Heart right ventricle (tissue), 16 donors: ENCODE measurements at regions of chr17 and their contacts with region 1.

Region 1: GRCh38 chr17:45098869-45099616 is 33.3 kb downstream of the PLCD3 start:
- DNase-seq: peak; percentile 87 to 88
- ATAC-seq: peak; percentile 70 to 86 (median 78)
- H3K4me3 ChIP-seq: no peak overlapping the region
- H3K27ac ChIP-seq: peak overlapping the region in 7 of 10 donors; percentile 6 to 53 (median 18)
- H3K4me1 ChIP-seq: peaks cover 4 to 55% (median 23%) of the 10 kb centered on the region in 9 donors
- H3K27me3 ChIP-seq: no peaks in the 10 kb centered on the region
- CTCF ChIP-seq: peak; percentile 79 to 94 (median 92)

Region 2: GRCh38 chr17:44911133-44912001 is 187.7 kb before region 1 on chr17:
- intact Hi-C with region 1: loop called in 6 of 10 experiments (anchors 5 to 10 kb)
- DNase-seq: peak; percentile 63 to 64
- ATAC-seq: peak; percentile 57 to 85 (median 80)
- H3K4me3 ChIP-seq: peak overlapping the region in 9 of 10 donors; percentile 14 to 52 (median 46)
- H3K27ac ChIP-seq: peak overlapping the region in 8 of 10 donors; percentile 28 to 73 (median 44)
- H3K4me1 ChIP-seq: peaks cover 0 to 32% (median 13%) of the 10 kb centered on the region in 9 donors
- H3K27me3 ChIP-seq: peaks cover 0 to 42% (median 12%) of the 10 kb centered on the region in 7 donors
- CTCF ChIP-seq: peak; percentile 23 to 69 (median 56)

Region 3: DNA sequence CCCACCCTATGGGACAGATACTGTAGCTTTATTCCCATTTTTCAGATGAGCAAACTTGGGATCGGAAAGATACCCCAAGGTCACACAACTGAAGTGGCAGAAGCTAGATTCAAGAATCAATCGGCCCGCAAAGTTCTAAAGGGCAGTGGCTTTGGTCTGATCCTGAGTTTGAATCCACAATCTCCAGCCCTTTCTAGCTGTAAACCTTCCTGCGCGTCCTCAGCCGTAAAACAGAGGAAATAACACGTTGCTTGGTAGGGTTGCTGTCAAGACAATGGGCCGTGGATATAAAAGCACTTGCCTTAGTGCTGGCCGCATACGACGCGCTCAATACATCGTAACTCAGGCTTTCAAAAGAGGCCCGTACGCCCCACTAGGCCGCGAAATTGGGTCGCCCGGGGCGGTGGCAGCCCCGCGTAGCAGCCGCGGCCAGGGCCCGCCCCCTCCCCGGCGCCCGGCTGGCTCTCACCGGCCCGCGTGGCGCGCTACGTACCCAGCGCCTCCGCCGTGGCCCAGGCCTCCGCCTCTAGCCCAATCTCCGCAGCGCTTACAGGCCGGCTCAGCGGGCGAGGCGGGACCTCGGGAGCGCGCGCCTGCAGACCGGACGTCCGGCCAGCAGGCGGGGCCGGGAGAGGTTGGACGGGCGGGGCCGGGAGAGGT is 47.9 kb before region 1 on chr17 and contains the start of gene DCAKD:
- intact Hi-C with region 1: loop called in 1 of 10 experiments (anchors 5 kb)
- DNase-seq: peak; percentile 91 to 94
- ATAC-seq: peak; percentile 98 to 100 (median 99)
- H3K4me3 ChIP-seq: peak within 1 kb of the TSS; percentile 26 to 76 (median 70)
- H3K27ac ChIP-seq: peak within 1 kb of the TSS; percentile 76 to 97 (median 94)
- H3K4me1 ChIP-seq: peaks cover 2 to 31% (median 21%) of the 10 kb centered on the region in 9 donors
- H3K27me3 ChIP-seq: no peaks in the 10 kb centered on the region
- CTCF ChIP-seq: peak in 4 of 9 donors; percentile 6 to 21 (median 8)
- total RNA-seq, gene DCAKD: 28.1 to 46.2 (median 32.7) TPM